Transverse colon (tissue), 4 donors: ENCODE measurements at regions of chr2 and their contacts with region 1.

Region 1: GRCh38 chr2:237563816-237564215 is 2.6 kb upstream of the PRLH start:
- DNase-seq: no peak
- H3K4me3 ChIP-seq: no peak overlapping the region
- H3K27ac ChIP-seq: no peak overlapping the region
- H3K4me1 ChIP-seq: peaks cover 4 to 7% (median 5%) of the 10 kb centered on the region in 4 donors
- H3K27me3 ChIP-seq: peaks cover 12% of the 10 kb centered on the region
- CTCF ChIP-seq: no peak
- EP300 ChIP-seq: no peak
- POLR2A ChIP-seq: no peak

Region 2: GRCh38 chr2:237512774-237513466 is 50.9 kb before region 1 on chr2:
- in situ Hi-C with region 1: loop called in 2 of 4 experiments (anchors 5 to 10 kb)
- intact Hi-C with region 1: no loop called
- DNase-seq: peak; percentile 88
- H3K4me3 ChIP-seq: no peak overlapping the region
- H3K27ac ChIP-seq: no peak overlapping the region
- H3K4me1 ChIP-seq: peaks cover 6 to 32% (median 8%) of the 10 kb centered on the region in 4 donors
- H3K27me3 ChIP-seq: no peaks in the 10 kb centered on the region
- CTCF ChIP-seq: peak; percentile 82 to 96 (median 89)
- EP300 ChIP-seq: no peak
- POLR2A ChIP-seq: peak; percentile 12